ENCODE measurements at regions of chr12 and their contacts with region 1.

Region 1: GRCh38 chr12:65602610-65603295 is 221.5 kb upstream of the HMGA2 start:
- DNase-seq: peak; percentile 67 to 84 (median 77)
- ATAC-seq: peak; percentile 99
- H3K4me3 ChIP-seq: peak overlapping the region; percentile 30
- H3K27ac ChIP-seq: peak overlapping the region; percentile 50; the same call in 2 of the 3 replicates
- H3K4me1 ChIP-seq: peaks cover 0 to 9% of the 10 kb centered on the region in 2 experiments; a peak in 2 of 5 replicates
- H3K27me3 ChIP-seq: no peaks in the 10 kb centered on the region
- CTCF ChIP-seq: peak; percentile 75 to 87 (median 78)
- EP300 ChIP-seq: no peak; the same call in 1 of the 2 replicates
- POLR2A ChIP-seq: no peak
- RAD21 ChIP-seq: peak; percentile 67 to 75

Region 2: GRCh38 chr12:65585648-65586602 is 16.8 kb before region 1 on chr12:
- CTCF ChIA-PET with region 1: no interaction called
- POLR2A ChIA-PET with region 1: no interaction called
- in situ Hi-C with region 1: no loop called
- intact Hi-C with region 1: no loop called
- DNase-seq: no peak
- ATAC-seq: no peak
- H3K4me3 ChIP-seq: no peak overlapping the region
- H3K27ac ChIP-seq: no peak overlapping the region
- H3K4me1 ChIP-seq: no peaks in the 10 kb centered on the region
- H3K27me3 ChIP-seq: no peaks in the 10 kb centered on the region
- CTCF ChIP-seq: no peak
- EP300 ChIP-seq: no peak
- POLR2A ChIP-seq: no peak
- RAD21 ChIP-seq: 0 out of 4 replicates have a peak, but pooled peaks of 1 of the 2 experiments have one; percentile 16

Region 3: GRCh38 chr12:65673732-65674131 is 71.0 kb after region 1 on chr12:
- CTCF ChIA-PET with region 1: no interaction called
- POLR2A ChIA-PET with region 1: interaction called, 3 read pairs
- in situ Hi-C with region 1: no loop called
- intact Hi-C with region 1: loop called (anchors 2 kb)
- DNase-seq: no peak
- ATAC-seq: no peak
- H3K4me3 ChIP-seq: no peak overlapping the region
- H3K27ac ChIP-seq: no peak overlapping the region
- H3K4me1 ChIP-seq: peaks cover 0 to 21% of the 10 kb centered on the region in 2 experiments; a peak in 3 of 5 replicates
- H3K27me3 ChIP-seq: no peaks in the 10 kb centered on the region
- CTCF ChIP-seq: peak in 1 of 3 experiments; percentile 39; a peak in 2 of 6 replicates
- EP300 ChIP-seq: no peak
- POLR2A ChIP-seq: no peak
- RAD21 ChIP-seq: peak; percentile 58 to 74

Region 4: DNA sequence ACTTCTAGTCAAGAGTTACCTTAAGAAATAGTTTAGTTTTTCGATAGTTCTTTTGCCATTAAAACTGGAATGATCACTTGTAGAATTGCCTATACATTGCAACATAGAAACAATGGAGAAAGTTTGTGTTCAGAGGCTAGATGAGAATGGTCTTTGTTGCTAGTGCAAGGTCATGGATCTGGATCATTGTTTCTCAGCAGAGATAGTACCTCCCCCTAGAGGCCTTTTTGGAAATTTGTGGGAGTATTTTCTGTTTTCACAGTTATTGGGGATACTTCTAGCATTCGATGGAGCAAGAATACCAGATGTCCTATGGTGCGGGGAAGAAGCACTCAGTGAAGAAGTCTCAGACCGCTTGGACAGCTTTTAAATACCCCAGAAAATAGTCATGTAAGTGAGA is 82.8 kb after region 1 on chr12:
- CTCF ChIA-PET with region 1: interaction called, 7 read pairs
- POLR2A ChIA-PET with region 1: no interaction called
- in situ Hi-C with region 1: no loop called
- intact Hi-C with region 1: loop called (anchors 1 kb)
- DNase-seq: peak; percentile 20 to 34 (median 25)
- ATAC-seq: peak; percentile 79
- H3K4me3 ChIP-seq: no peak overlapping the region
- H3K27ac ChIP-seq: no peak overlapping the region
- H3K4me1 ChIP-seq: peaks cover 0 to 10% of the 10 kb centered on the region in 2 experiments; a peak in 2 of 5 replicates
- H3K27me3 ChIP-seq: no peaks in the 10 kb centered on the region
- CTCF ChIP-seq: peak; percentile 50 to 70 (median 60)
- EP300 ChIP-seq: no peak
- POLR2A ChIP-seq: no peak
- RAD21 ChIP-seq: peak; percentile 55 to 81

Region 5: GRCh38 chr12:65986047-65986446 is 383.3 kb after region 1 on chr12:
- CTCF ChIA-PET with region 1: no interaction called
- POLR2A ChIA-PET with region 1: no interaction called
- in situ Hi-C with region 1: no loop called
- intact Hi-C with region 1: loop called (anchors 1 kb)
- DNase-seq: no peak
- ATAC-seq: no peak
- H3K4me3 ChIP-seq: no peak overlapping the region
- H3K27ac ChIP-seq: no peak overlapping the region
- H3K4me1 ChIP-seq: no peaks in the 10 kb centered on the region
- H3K27me3 ChIP-seq: no peaks in the 10 kb centered on the region
- CTCF ChIP-seq: no peak
- EP300 ChIP-seq: no peak
- POLR2A ChIP-seq: no peak
- RAD21 ChIP-seq: no peak

Region 6: GRCh38 chr12:66235626-66236281 is 633.0 kb after region 1 on chr12:
- CTCF ChIA-PET with region 1: no interaction called
- POLR2A ChIA-PET with region 1: no interaction called
- in situ Hi-C with region 1: no loop called
- intact Hi-C with region 1: no loop called
- DNase-seq: no peak
- ATAC-seq: no peak
- H3K4me3 ChIP-seq: peak overlapping the region; percentile 45
- H3K27ac ChIP-seq: peak overlapping the region; percentile 41; the same call in 1 of the 3 replicates
- H3K4me1 ChIP-seq: peaks cover 8 to 9% of the 10 kb centered on the region in 2 experiments
- H3K27me3 ChIP-seq: peaks cover 2 to 5% of the 10 kb centered on the region in 2 experiments; a peak in 2 of 5 replicates
- CTCF ChIP-seq: no peak
- EP300 ChIP-seq: no peak
- POLR2A ChIP-seq: no peak
- RAD21 ChIP-seq: no peak